Aorta (tissue), 5 donors: ENCODE measurements at regions of chr12 and their contacts with region 1.

Region 1: DNA sequence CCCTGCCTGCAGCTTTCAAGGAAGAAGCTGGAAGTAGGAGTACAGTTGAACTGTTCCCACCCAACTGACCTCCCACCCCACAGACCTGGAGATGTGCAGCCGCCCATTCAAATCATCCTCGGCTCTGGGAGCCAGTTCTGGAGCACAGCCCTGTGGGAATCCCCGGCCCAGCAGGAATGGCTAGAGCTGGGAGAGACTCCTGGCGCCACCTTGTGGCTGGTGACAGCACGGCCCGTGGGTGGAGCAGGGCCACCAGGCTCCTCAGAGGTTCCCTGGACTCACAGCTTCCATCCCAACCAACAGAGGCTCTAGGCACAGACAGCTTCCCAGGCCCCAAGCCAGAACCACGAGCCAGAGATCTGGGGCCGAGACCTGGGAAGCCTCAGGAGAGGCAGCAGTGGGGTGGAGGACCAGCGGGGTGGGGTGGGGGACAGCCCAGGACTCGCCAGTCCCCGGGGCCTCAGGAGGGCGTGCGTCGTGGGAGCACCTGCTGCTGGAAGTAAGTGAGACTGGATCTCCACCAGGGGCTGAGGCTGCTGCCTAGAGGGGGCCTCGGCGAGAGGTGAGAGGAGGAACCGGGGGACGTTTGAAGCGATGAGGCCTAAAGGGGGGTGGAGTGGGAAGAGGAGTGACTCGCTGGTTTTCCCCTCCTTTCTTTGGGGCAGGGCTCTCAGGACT is 43.4 kb downstream of the RNF34 start:
- DNase-seq: peak; percentile 91 to 96
- ATAC-seq: peak; percentile 85
- H3K4me3 ChIP-seq: no peak overlapping the region
- H3K27ac ChIP-seq: no peak overlapping the region
- H3K4me1 ChIP-seq: no peaks in the 10 kb centered on the region
- H3K27me3 ChIP-seq: no peaks in the 10 kb centered on the region

Region 2: GRCh38 chr12:121334513-121335343 is 108.6 kb before region 1 on chr12:
- intact Hi-C with region 1: loop called (anchors 2 to 5 kb)
- DNase-seq: no peak
- ATAC-seq: peak; percentile 82
- H3K4me3 ChIP-seq: no peak overlapping the region
- H3K27ac ChIP-seq: no peak overlapping the region
- H3K4me1 ChIP-seq: no peaks in the 10 kb centered on the region
- H3K27me3 ChIP-seq: no peaks in the 10 kb centered on the region

Region 3: GRCh38 chr12:121351820-121352681 is 91.3 kb before region 1 on chr12 and contains the start of gene ANAPC5:
- intact Hi-C with region 1: loop called in 1 of 2 experiments (anchors 5 kb)
- DNase-seq: peak; percentile 96 to 97
- ATAC-seq: peak; percentile 100
- H3K4me3 ChIP-seq: peak within 1 kb of the TSS; percentile 78 to 92
- H3K27ac ChIP-seq: peak within 1 kb of the TSS in 1 of 2 donors; percentile 65
- H3K4me1 ChIP-seq: no peaks in the 10 kb centered on the region
- H3K27me3 ChIP-seq: no peaks in the 10 kb centered on the region
- total RNA-seq, gene ANAPC5: 105 to 118 TPM